ENCODE measurements at regions of chr5 and their contacts with region 1.

Region 1: GRCh38 chr5:88729084-88729828 is 153.7 kb downstream of the MEF2C start:
- DNase-seq: no peak
- ATAC-seq: peak; percentile 21
- H3K4me3 Mint-ChIP-seq: no peak overlapping the region
- H3K27ac Mint-ChIP-seq: peak overlapping the region; percentile 78
- H3K4me1 Mint-ChIP-seq: peaks cover 51% of the 10 kb centered on the region
- H3K27me3 Mint-ChIP-seq: no peaks in the 10 kb centered on the region
- CTCF ChIP-seq: peak; percentile 58

Region 2: DNA sequence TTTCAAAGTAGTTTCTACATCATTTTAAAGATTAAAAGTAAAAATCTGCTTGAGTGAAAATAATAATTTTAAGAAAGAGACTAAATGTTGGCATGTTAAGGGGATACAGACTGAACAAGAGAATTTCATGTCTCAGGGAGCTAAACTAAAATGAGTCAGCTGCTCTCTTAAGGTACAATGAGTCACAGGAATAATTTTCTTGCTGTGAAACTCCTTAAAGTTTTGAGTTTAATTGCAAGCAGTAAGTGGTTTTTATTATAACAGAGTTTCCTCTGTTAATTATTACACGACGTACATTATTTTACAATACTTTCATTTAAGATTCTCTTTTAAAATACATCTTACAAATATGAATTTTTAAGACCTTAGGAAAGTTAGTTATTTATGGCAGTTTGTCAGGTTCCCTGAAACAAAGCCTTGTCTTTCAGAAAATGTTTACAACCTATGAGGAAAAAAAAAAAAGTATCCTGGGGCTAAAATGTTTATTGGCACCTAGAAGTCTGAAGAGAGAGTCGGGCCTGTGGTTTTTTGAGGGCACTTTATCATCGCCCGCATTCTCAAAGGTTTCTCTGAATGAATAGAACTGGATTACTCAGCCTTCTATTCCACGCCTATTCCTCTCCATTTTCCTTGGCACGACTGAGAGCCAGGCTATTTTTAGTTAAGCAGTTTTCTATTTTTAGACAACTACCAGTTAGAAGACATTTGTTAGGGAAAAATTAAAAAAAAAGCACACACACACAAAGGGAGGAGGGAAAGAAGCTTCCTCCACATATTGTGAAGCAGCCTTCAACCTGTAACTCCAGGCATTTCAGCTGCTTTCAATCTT is 56.3 kb after region 1 on chr5:
- CTCF ChIA-PET with region 1: interaction called, 11 read pairs
- POLR2A ChIA-PET with region 1: interaction called, 9 read pairs
- intact Hi-C with region 1: loop called (anchors 2 kb)
- DNase-seq: no peak
- ATAC-seq: peak; percentile 52
- H3K4me3 Mint-ChIP-seq: peak overlapping the region; percentile 69
- H3K27ac Mint-ChIP-seq: peak overlapping the region; percentile 86
- H3K4me1 Mint-ChIP-seq: peaks cover 66% of the 10 kb centered on the region
- H3K27me3 Mint-ChIP-seq: no peaks in the 10 kb centered on the region
- CTCF ChIP-seq: no peak

Region 3: DNA sequence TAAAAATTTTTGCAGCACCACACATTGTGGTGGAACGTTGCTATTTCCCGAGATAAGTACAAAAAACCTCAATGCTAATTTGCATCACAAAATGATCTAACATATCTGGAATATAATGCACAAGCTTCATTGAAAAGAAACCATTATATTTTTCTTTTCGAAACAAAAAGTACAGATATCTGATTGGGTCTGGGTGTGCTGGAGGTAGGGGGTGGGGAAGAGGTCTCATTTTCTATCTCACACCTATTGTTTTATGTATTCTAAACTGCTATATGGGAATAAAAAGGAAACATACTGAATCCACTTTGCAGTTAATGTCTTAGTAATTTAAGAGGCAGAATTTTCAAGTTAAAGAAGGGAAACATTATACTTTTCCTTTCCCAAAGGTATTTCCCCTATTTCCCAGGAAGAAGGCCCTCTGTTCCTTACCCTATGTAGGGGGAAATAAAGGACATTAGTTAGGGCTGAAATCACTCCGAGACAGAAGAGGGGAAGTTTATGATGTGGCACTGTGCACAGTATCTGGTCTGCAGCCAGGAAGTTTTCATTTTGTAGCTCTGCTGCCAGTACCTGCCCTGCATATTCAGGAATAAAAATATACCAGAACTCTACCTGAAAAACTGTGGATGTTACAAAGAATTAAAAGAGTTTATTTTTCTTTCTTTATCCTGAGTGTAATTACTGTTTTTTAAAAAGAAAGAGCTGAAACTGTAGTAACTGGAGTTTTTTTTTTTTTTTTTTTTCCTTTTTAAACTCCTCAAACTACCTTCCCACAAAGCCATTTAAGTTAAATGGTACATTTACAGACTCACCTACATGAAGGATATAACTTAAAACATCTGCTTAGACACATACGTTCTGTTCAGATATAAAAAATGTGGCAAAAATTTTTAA is 146.3 kb after region 1 on chr5:
- CTCF ChIA-PET with region 1: interaction called, 17 read pairs
- POLR2A ChIA-PET with region 1: interaction called, 242 read pairs
- intact Hi-C with region 1: no loop called
- DNase-seq: no peak
- ATAC-seq: peak; percentile 45
- H3K4me3 Mint-ChIP-seq: peak overlapping the region; percentile 63
- H3K27ac Mint-ChIP-seq: peak overlapping the region; percentile 68
- H3K4me1 Mint-ChIP-seq: peaks cover 68% of the 10 kb centered on the region
- H3K27me3 Mint-ChIP-seq: no peaks in the 10 kb centered on the region
- CTCF ChIP-seq: no peak

Region 4: GRCh38 chr5:89268460-89268859 is 539.2 kb after region 1 on chr5:
- CTCF ChIA-PET with region 1: interaction called, 4 read pairs
- POLR2A ChIA-PET with region 1: interaction called, 5 read pairs
- intact Hi-C with region 1: loop called (anchors 1 kb)
- DNase-seq: no peak
- ATAC-seq: peak; percentile 27
- H3K4me3 Mint-ChIP-seq: peak overlapping the region; percentile 50
- H3K27ac Mint-ChIP-seq: peak overlapping the region; percentile 92
- H3K4me1 Mint-ChIP-seq: peaks cover 78% of the 10 kb centered on the region
- H3K27me3 Mint-ChIP-seq: no peaks in the 10 kb centered on the region
- CTCF ChIP-seq: no peak

Region 5: DNA sequence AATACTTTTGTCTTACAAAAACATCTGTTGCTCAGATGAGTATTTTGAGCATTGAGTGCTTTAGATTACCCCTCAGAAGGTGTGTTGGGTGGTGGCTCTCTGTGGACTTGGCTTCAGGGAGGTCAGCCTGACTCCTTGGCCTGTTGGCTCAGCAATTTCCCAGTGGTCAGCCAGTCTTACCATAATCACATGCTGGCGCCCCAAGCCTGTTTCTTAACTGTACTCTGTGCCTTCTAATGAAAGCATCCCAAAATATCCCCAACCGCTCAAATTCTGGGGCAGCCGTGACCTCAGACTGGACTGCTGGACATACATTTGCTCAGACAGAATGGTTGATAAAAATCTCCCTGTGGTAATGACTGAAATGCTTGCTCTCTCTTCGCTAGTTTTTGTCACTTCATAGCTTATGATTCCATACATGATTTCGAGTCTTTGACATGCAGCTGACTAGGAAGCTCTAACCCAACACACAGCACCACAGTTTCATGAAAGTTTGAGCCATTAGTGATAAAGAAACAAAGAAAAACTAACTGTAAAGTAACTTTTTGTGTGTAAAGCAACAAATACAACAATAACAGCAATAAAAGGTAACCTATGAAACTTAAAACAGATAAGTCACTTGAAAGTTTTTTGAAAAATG is 716.0 kb after region 1 on chr5:
- CTCF ChIA-PET with region 1: no interaction called
- POLR2A ChIA-PET with region 1: interaction called, 5 read pairs
- intact Hi-C with region 1: loop called (anchors 2 kb)
- DNase-seq: no peak
- ATAC-seq: no peak
- H3K4me3 Mint-ChIP-seq: peak overlapping the region; percentile 15
- H3K27ac Mint-ChIP-seq: peak overlapping the region; percentile 88
- H3K4me1 Mint-ChIP-seq: peaks cover 80% of the 10 kb centered on the region
- H3K27me3 Mint-ChIP-seq: no peaks in the 10 kb centered on the region
- CTCF ChIP-seq: no peak

Region 6: DNA sequence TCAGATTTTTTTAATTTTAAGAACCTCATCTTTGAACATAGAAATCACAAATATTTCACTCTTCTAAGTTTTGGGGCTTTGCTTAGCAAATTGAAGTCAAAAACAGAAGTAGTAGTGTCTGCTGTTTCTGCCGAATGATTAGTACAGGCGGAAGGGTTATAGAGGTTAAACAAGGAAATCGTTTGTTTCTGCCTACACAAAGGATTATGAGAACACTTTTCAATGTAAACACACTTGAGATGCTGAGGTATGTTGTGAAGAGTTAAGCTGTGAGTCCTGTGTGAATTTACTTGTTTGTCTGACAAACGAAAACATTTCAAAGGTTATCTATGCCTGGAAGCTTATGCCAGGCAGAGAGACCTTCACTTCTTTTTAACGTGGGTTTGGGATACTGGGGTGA is 1455.5 kb after region 1 on chr5:
- CTCF ChIA-PET with region 1: interaction called, 4 read pairs
- POLR2A ChIA-PET with region 1: no interaction called
- intact Hi-C with region 1: loop called (anchors 1 kb)
- DNase-seq: no peak
- ATAC-seq: no peak
- H3K4me3 Mint-ChIP-seq: no peak overlapping the region
- H3K27ac Mint-ChIP-seq: no peak overlapping the region
- H3K4me1 Mint-ChIP-seq: peaks cover 3% of the 10 kb centered on the region
- H3K27me3 Mint-ChIP-seq: peaks cover 4% of the 10 kb centered on the region
- CTCF ChIP-seq: no peak